CD4-positive, alpha-beta T cell (primary cell): ENCODE measurements at regions of chr20 and their contacts with region 1.

Region 1: DNA sequence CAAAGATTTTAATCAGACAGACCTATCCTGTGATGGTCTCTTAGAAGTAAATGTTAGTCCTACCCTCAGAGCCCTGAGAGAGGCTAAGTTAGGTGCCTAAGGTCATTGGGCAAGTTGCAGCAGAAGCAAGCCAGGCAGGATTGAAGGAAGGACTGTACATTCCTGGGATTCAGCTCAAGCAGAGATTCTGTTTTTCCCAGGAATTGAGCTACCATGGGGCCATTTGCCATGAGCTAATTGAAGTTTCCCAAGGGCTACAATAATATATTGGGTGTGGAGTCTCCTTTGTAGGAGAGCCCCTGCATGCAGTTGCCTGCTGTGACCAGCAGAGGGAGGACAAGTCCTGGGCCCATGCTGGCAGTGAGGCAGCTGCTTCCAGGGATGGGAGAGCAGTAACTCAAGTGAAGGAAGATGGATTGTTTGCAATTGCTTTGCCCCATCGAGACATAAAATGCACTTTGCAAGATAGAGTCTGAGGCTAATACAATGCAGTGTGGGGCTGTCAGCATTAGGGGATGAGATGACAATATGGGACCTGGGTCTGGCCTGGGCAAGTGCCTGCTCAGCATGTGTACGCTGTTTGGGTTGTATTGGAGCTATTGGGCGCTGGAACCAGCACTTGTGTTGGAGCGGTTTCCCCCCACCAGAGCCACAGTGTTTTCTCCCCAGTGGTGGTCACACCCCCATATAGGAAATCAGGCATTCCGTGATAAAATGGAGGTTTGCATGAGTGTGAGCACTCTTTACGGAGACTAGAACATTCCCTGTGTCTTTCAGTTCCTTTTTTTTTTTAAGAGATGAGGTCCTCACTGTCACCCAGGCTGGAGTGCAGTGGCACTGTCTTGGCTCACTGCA is 27.9 kb downstream of the DNMT3B start:
- DNase-seq: peak; percentile 54 to 83 (median 66)
- ATAC-seq: peak; percentile 66
- H3K4me3 ChIP-seq: no peak overlapping the region
- H3K4me3 Mint-ChIP-seq: no peak overlapping the region
- H3K27ac ChIP-seq: no peak overlapping the region
- H3K27ac Mint-ChIP-seq: peak overlapping the region; percentile 37
- H3K4me1 ChIP-seq: peaks cover 40% of the 10 kb centered on the region
- H3K4me1 Mint-ChIP-seq: peaks cover 44% of the 10 kb centered on the region
- H3K27me3 ChIP-seq: no peaks in the 10 kb centered on the region
- H3K27me3 Mint-ChIP-seq: no peaks in the 10 kb centered on the region
- CTCF ChIP-seq: peak; percentile 98

Region 2: GRCh38 chr20:31894980-31895675 is 895.0 kb before region 1 on chr20:
- CTCF ChIA-PET with region 1: no interaction called
- POLR2A ChIA-PET with region 1: no interaction called
- intact Hi-C with region 1: no loop called
- DNase-seq: peak in 4 of 14 experiments; percentile 4 to 69 (median 58)
- ATAC-seq: peak; percentile 73
- H3K4me3 ChIP-seq: no peak overlapping the region
- H3K4me3 Mint-ChIP-seq: no peak overlapping the region
- H3K27ac ChIP-seq: no peak overlapping the region
- H3K27ac Mint-ChIP-seq: no peak overlapping the region
- H3K4me1 ChIP-seq: no peaks in the 10 kb centered on the region
- H3K4me1 Mint-ChIP-seq: no peaks in the 10 kb centered on the region
- H3K27me3 ChIP-seq: no peaks in the 10 kb centered on the region
- H3K27me3 Mint-ChIP-seq: peaks cover 38% of the 10 kb centered on the region
- CTCF ChIP-seq: no peak

Region 3: DNA sequence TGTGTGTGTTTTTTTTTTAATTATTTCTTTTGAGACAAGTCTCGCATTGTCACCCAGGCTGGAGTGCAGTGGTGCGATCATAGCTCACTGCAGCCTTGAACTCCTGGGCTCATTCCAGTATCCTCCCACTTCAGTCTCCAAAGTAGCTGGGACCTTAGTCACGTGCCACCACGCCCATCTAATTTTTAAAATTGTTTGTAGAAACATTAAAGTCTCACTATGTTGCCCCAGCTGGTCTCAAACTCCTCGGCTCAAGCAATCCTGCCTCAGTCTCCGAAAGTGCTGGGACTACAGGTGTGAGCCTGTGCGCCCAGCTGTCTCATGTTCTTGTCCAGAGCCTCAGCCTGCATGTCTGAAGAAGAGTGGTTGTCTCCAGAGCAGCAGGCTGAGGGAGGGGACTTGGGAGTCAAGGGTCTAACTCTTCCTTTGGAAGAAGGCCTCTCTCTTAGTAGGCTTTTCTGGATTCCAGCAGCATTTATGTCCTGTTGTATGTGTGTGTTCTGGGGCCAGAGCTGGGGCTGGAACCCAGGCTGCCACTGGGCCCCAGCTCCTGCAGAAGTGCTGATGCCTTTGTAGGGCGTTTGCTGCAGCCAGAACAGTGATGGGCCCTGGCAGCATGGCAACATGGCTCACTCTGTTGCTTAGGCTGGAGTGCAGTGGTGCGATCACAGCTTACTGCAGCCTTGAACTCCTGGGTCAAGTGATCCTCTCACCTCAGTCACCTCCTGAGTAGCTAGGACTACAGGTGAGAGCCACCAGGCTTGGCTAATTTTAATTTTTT is 22.5 kb before region 1 on chr20:
- CTCF ChIA-PET with region 1: no interaction called
- POLR2A ChIA-PET with region 1: no interaction called
- intact Hi-C with region 1: no loop called
- DNase-seq: no peak
- ATAC-seq: no peak
- H3K4me3 ChIP-seq: no peak overlapping the region
- H3K4me3 Mint-ChIP-seq: no peak overlapping the region
- H3K27ac ChIP-seq: no peak overlapping the region
- H3K27ac Mint-ChIP-seq: no peak overlapping the region
- H3K4me1 ChIP-seq: peaks cover 25% of the 10 kb centered on the region
- H3K4me1 Mint-ChIP-seq: peaks cover 26% of the 10 kb centered on the region
- H3K27me3 ChIP-seq: no peaks in the 10 kb centered on the region
- H3K27me3 Mint-ChIP-seq: no peaks in the 10 kb centered on the region
- CTCF ChIP-seq: no peak

Region 4: GRCh38 chr20:32779500-32780211 is 10.5 kb before region 1 on chr20:
- CTCF ChIA-PET with region 1: interaction called, 15 read pairs
- POLR2A ChIA-PET with region 1: no interaction called
- intact Hi-C with region 1: no loop called
- DNase-seq: no peak
- ATAC-seq: no peak
- H3K4me3 ChIP-seq: no peak overlapping the region
- H3K4me3 Mint-ChIP-seq: no peak overlapping the region
- H3K27ac ChIP-seq: no peak overlapping the region
- H3K27ac Mint-ChIP-seq: no peak overlapping the region
- H3K4me1 ChIP-seq: peaks cover 5% of the 10 kb centered on the region
- H3K4me1 Mint-ChIP-seq: peaks cover 6% of the 10 kb centered on the region
- H3K27me3 ChIP-seq: no peaks in the 10 kb centered on the region
- H3K27me3 Mint-ChIP-seq: no peaks in the 10 kb centered on the region
- CTCF ChIP-seq: no peak

Region 5: DNA sequence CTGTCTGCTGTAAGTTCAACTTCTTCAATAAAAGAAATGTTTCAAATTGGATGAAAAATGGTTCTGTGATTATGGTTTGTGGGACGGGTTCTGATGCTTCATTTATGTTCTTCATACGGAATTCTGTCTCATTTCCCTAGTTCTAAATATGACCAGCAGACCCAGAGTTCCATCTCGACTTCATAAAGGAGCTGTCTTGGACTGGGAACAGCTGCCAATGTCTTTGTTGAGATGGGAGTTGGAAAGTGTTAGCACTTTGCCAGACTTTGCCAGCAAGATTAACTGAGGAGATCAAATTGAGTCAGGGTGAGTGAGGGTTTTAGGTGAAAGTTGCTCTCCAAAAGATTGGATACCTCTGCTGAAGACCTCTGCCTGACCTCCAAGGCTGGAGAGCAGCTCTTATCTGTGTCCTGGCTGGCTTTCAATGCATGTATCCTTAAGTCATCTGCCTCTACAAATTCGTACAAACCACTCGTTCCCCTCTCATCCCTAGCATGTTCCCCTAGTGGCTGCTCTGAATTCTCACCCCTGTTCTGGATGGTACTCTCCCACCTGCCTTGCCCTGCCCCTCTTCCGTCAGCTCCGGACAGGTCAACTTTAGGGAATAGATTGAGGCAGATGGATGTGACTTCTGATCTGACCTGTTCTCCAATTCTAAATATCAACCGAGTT is 68.7 kb after region 1 on chr20 and contains the start of gene EFCAB8:
- CTCF ChIA-PET with region 1: interaction called, 3 read pairs
- POLR2A ChIA-PET with region 1: no interaction called
- intact Hi-C with region 1: loop called (anchors 5 kb)
- DNase-seq: no peak
- ATAC-seq: no peak
- H3K4me3 ChIP-seq: no peak within 1 kb of the TSS
- H3K4me3 Mint-ChIP-seq: no peak within 1 kb of the TSS
- H3K27ac ChIP-seq: no peak within 1 kb of the TSS
- H3K27ac Mint-ChIP-seq: peak within 1 kb of the TSS; percentile 58
- H3K4me1 ChIP-seq: peaks cover 5% of the 10 kb centered on the region
- H3K4me1 Mint-ChIP-seq: peaks cover 36% of the 10 kb centered on the region
- H3K27me3 ChIP-seq: no peaks in the 10 kb centered on the region
- H3K27me3 Mint-ChIP-seq: no peaks in the 10 kb centered on the region
- CTCF ChIP-seq: no peak
- total RNA-seq, gene EFCAB8: 0.81 to 2.5 TPM

Region 6: GRCh38 chr20:32945710-32946221 is 155.6 kb after region 1 on chr20:
- CTCF ChIA-PET with region 1: interaction called, 7 read pairs
- POLR2A ChIA-PET with region 1: interaction called, 3 read pairs
- intact Hi-C with region 1: loop called (anchors 1 to 5 kb)
- DNase-seq: peak in 5 of 14 experiments; percentile 7 to 72 (median 50)
- ATAC-seq: peak; percentile 93
- H3K4me3 ChIP-seq: no peak overlapping the region
- H3K4me3 Mint-ChIP-seq: peak overlapping the region; percentile 30
- H3K27ac ChIP-seq: peak overlapping the region in 1 of 2 donors; percentile 0
- H3K27ac Mint-ChIP-seq: peak overlapping the region; percentile 88
- H3K4me1 ChIP-seq: peaks cover 18% of the 10 kb centered on the region
- H3K4me1 Mint-ChIP-seq: peaks cover 42% of the 10 kb centered on the region
- H3K27me3 ChIP-seq: no peaks in the 10 kb centered on the region
- H3K27me3 Mint-ChIP-seq: no peaks in the 10 kb centered on the region
- CTCF ChIP-seq: peak; percentile 73

Region 7: GRCh38 chr20:33291830-33292355 is 501.8 kb after region 1 on chr20:
- CTCF ChIA-PET with region 1: interaction called, 3 read pairs
- POLR2A ChIA-PET with region 1: no interaction called
- intact Hi-C with region 1: loop called (anchors 1 to 2 kb)
- DNase-seq: peak; percentile 51 to 79 (median 60)
- ATAC-seq: peak; percentile 67
- H3K4me3 ChIP-seq: no peak overlapping the region
- H3K4me3 Mint-ChIP-seq: no peak overlapping the region
- H3K27ac ChIP-seq: no peak overlapping the region
- H3K27ac Mint-ChIP-seq: no peak overlapping the region
- H3K4me1 ChIP-seq: no peaks in the 10 kb centered on the region
- H3K4me1 Mint-ChIP-seq: no peaks in the 10 kb centered on the region
- H3K27me3 ChIP-seq: no peaks in the 10 kb centered on the region
- H3K27me3 Mint-ChIP-seq: peaks cover 10% of the 10 kb centered on the region
- CTCF ChIP-seq: peak; percentile 98